ENCODE measurements at regions of chr7 and their contacts with region 1.

Region 1: DNA sequence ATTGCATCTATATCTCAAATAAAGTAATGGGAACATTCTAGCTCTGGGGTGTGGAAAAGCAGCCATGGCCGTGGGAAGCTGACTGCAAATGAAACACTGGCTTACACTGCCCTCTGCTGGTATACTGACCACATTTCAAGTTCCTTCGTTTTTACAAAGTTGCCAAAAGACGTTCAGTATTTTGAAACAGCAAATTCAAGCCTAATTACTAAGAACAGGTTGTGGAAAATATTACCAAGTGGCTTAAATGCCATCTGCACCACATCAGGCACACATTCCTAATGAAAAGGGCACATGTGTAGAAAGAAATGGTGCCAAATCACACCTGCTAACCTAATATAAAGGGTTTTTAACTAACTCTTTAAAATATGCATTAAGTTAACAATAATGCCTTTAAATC is 83.9 kb downstream of the JAZF1 start:
- DNase-seq: peak; percentile 45
- H3K4me3 Mint-ChIP-seq: no peak overlapping the region
- H3K27ac Mint-ChIP-seq: no peak overlapping the region
- H3K4me1 Mint-ChIP-seq: no peaks in the 10 kb centered on the region
- H3K27me3 Mint-ChIP-seq: no peaks in the 10 kb centered on the region

Region 2: GRCh38 chr7:28044825-28045224 is 51.9 kb before region 1 on chr7:
- CTCF ChIA-PET with region 1: no interaction called
- DNase-seq: no peak
- H3K4me3 Mint-ChIP-seq: no peak overlapping the region
- H3K27ac Mint-ChIP-seq: no peak overlapping the region
- H3K4me1 Mint-ChIP-seq: no peaks in the 10 kb centered on the region
- H3K27me3 Mint-ChIP-seq: peaks cover 4% of the 10 kb centered on the region

Region 3: GRCh38 chr7:28062197-28062991 is 34.3 kb before region 1 on chr7:
- CTCF ChIA-PET with region 1: interaction called, 43 read pairs
- DNase-seq: peak; percentile 61
- H3K4me3 Mint-ChIP-seq: no peak overlapping the region
- H3K27ac Mint-ChIP-seq: no peak overlapping the region
- H3K4me1 Mint-ChIP-seq: no peaks in the 10 kb centered on the region
- H3K27me3 Mint-ChIP-seq: peaks cover 12% of the 10 kb centered on the region

Region 4: GRCh38 chr7:28078036-28078901 is 18.4 kb before region 1 on chr7:
- CTCF ChIA-PET with region 1: interaction called, 18 read pairs
- DNase-seq: peak; percentile 59
- H3K4me3 Mint-ChIP-seq: no peak overlapping the region
- H3K27ac Mint-ChIP-seq: no peak overlapping the region
- H3K4me1 Mint-ChIP-seq: no peaks in the 10 kb centered on the region
- H3K27me3 Mint-ChIP-seq: no peaks in the 10 kb centered on the region

Region 5: DNA sequence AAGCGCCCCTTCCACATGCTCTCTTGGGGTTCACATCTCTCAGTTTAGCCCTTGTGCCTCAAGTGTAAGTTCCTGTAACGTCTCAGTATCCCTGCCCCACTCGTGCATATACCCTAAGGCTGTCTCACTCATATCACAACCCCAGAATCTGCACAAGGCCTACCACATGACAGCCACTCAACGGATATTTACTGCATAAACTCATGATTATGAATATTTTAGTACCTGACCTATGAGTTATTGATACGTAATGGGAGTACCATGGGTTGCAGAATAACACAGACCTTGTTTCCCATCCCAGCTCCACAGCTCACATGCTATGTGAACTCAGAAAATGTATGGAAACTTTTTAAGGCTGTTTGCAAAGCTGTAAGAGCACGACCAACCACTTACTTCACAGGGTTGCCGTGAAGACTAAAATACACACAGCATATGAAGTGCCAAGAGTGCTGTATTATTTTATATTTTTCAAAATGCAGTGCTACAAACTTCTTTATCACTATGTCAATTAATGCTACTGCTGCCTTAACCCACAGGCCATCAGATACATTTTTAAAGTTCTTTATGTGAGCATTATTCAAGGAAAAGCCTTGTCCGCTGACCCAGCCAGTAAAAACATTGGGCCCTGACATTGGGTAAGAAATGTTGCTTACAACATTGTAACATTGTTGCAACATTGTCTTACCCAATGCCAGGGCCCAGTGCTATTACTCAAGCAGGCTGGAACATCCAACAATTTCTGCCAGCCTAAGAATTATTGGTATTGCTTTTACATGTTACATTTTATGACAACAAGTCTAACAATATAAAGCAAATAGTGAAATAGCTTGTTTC is 13.3 kb before region 1 on chr7:
- CTCF ChIA-PET with region 1: interaction called, 18 read pairs
- DNase-seq: no peak
- H3K4me3 Mint-ChIP-seq: no peak overlapping the region
- H3K27ac Mint-ChIP-seq: no peak overlapping the region
- H3K4me1 Mint-ChIP-seq: no peaks in the 10 kb centered on the region
- H3K27me3 Mint-ChIP-seq: no peaks in the 10 kb centered on the region

Region 6: GRCh38 chr7:28674359-28674782 is 577.7 kb after region 1 on chr7:
- CTCF ChIA-PET with region 1: no interaction called
- DNase-seq: no peak
- H3K4me3 Mint-ChIP-seq: no peak overlapping the region
- H3K27ac Mint-ChIP-seq: no peak overlapping the region
- H3K4me1 Mint-ChIP-seq: no peaks in the 10 kb centered on the region
- H3K27me3 Mint-ChIP-seq: no peaks in the 10 kb centered on the region

Measured in activated naive CD4-positive, alpha-beta T cell treated with anti-CD3 and anti-CD28 coated beads, Interleukin-2, amount 10 ng/mL, durations not matched to agents 7 days and 5 days (primary cell).